ENCODE measurements at regions of chr20 and their contacts with region 1.

Region 1: GRCh38 chr20:20184149-20184548 is 131.8 kb downstream of the CFAP61 start:
- H3K4me3 Mint-ChIP-seq: no peak overlapping the region
- H3K27ac Mint-ChIP-seq: no peak overlapping the region
- H3K4me1 Mint-ChIP-seq: peaks cover 10% of the 10 kb centered on the region
- H3K27me3 Mint-ChIP-seq: peaks cover 6% of the 10 kb centered on the region

Region 2: DNA sequence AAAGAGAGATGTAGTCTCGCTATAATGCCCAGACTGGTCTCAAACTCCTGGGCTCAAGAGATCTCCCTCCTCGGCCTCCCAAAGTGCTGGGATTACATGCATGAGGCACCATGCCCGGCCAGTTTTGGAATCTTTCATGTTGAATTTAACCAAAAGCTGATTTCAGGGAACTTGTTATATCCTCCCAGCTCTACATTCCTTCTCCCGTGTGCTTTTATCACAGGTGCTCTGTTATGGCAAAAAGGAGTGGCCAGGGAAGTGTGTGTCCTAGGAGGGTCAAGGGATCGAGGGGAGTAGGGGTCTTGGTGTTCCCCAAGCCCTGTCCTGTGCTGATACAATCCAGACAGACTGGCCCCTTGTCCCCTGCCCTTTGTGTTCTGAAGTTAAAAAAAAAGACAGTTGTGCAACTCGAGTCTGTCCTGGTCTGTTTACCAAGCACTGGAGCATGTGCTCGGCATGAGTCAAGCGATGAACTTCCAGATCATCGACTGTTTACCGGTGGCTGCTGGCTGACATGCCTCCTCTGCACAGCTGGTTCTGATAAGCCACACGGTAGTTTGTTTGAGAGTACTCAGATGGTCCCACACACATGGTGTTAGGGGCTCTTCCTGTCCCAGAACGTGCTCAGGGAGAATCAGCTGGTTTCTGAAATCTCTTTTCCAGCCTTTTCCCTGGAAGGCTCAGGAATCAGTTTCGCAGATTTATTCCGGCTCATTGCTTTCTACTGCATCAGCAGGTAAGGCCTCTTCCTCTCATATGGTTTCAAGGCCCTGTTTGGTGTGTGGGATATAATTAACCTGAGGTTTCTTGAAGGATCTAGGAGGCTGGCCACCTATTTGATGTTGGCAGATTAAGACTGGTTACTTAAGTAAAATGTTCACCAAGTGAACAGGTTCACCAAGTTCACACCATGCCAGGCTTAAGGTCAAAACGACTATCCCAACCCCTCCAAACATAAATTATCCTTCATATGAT is 219.6 kb before region 1 on chr20:
- intact Hi-C with region 1: no loop called
- H3K4me3 Mint-ChIP-seq: no peak overlapping the region
- H3K27ac Mint-ChIP-seq: peak overlapping the region; percentile 68
- H3K4me1 Mint-ChIP-seq: peaks cover 42% of the 10 kb centered on the region
- H3K27me3 Mint-ChIP-seq: no peaks in the 10 kb centered on the region

Region 3: DNA sequence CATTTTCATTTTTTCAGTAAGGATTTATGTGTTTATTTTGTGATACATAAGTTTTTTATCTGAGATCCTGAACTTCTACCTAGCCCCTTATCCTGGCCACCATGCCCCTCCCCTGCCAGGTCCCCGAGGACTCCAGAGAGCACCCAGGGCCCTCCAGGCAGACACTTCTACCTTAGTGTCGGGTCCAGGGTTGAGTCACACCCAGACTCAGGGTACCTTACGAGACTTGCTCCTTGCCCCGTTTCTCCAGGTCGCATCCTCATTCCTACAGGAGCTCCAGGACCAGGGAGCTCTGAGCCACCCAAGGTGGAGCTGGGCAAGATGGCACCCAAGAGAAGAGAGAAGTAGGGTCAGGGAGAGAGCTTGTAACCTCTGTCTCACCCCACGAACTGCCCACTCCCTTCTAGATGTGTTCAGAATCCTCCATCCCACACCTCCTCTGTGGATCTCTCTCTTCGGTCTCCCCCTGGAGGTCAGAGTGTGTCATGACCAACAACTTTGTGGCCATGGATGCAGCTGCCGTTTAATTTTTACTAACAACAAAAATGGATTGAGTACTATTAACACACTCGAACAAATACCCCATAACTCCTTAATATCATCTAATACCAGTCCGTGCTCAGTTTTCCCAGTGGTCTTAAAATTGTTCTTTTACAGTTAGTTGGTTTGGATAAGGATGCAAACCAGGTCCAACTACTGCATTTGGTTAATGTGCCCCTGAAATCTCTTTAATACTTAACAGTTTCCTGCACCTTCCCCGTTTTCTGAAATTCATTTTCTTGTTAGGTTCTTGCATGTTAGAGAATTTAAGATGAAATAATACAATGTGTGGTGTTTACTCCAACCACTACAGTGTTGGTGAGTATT is 53.2 kb after region 1 on chr20:
- intact Hi-C with region 1: loop called (anchors 2 kb)
- H3K4me3 Mint-ChIP-seq: no peak overlapping the region
- H3K27ac Mint-ChIP-seq: no peak overlapping the region
- H3K4me1 Mint-ChIP-seq: peaks cover 18% of the 10 kb centered on the region
- H3K27me3 Mint-ChIP-seq: peaks cover 7% of the 10 kb centered on the region

Region 4: GRCh38 chr20:20407891-20408805 is 224.0 kb after region 1 on chr20:
- intact Hi-C with region 1: loop called (anchors 2 kb)
- H3K4me3 Mint-ChIP-seq: no peak overlapping the region
- H3K27ac Mint-ChIP-seq: no peak overlapping the region
- H3K4me1 Mint-ChIP-seq: peaks cover 10% of the 10 kb centered on the region
- H3K27me3 Mint-ChIP-seq: no peaks in the 10 kb centered on the region

Region 5: DNA sequence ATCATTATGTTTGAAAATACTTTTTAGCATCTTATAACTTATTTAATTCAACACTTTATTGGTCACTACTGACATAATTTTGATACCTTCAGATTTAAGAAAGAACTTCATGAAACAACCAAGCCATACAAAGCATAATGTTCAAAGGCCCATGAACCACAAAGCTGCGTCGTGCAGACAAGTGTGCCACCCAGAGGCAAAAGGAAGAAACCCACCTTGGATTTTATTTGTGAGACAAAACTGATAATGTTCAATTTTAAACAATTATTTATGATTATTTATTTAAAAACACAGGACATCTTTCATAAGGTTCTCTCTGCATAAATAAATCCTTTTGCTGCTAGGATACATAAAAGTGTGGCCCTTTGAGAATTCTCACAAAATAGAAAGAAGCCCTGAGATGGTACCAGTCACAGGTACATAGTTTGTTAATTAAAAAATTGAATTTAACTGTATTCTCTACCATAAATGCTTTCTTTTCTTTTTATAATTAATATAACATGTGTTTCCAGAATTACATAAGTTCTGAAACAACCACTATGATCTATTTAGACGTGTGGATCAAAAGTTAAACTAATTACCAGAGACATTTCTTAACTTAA is 384.6 kb after region 1 on chr20:
- intact Hi-C with region 1: loop called (anchors 5 kb)
- H3K4me3 Mint-ChIP-seq: no peak overlapping the region
- H3K27ac Mint-ChIP-seq: no peak overlapping the region
- H3K4me1 Mint-ChIP-seq: no peaks in the 10 kb centered on the region
- H3K27me3 Mint-ChIP-seq: no peaks in the 10 kb centered on the region

Measured in dendritic cell treated with granulocyte-macrophage colony-stimulating factor and Interleukin-4, amounts not matched to agents 40 ng/mL and 50 ng/mL, for 4 days (primary cell).